Right ventricle myocardium superior (tissue), 1 donor: ENCODE measurements at regions of chr9 and their contacts with region 1.

Region 1: GRCh38 chr9:37913480-37914153 is 9.7 kb upstream of the SLC25A51 start:
- DNase-seq: peak; percentile 81
- ATAC-seq: peak; percentile 91

Region 2: DNA sequence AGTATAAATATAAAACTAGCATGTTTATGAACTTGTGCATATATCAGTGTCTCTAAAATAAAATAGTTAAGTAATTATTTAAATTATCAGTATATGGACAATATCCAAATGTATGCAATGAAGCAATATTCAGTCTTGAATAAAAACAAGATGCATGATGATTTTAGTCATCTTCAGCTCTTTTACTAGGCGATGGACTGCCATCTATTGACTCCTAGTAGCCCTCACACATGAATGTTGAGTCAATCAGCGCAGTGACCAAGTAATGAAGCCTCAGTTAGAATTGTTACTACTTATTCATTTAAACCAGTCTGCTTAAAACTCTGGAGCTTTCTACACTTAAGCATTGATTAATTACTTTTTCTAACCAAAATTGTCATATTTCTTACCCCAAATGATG is 584.0 kb before region 1 on chr9:
- intact Hi-C with region 1: no loop called
- DNase-seq: no peak
- ATAC-seq: no peak

Region 3: DNA sequence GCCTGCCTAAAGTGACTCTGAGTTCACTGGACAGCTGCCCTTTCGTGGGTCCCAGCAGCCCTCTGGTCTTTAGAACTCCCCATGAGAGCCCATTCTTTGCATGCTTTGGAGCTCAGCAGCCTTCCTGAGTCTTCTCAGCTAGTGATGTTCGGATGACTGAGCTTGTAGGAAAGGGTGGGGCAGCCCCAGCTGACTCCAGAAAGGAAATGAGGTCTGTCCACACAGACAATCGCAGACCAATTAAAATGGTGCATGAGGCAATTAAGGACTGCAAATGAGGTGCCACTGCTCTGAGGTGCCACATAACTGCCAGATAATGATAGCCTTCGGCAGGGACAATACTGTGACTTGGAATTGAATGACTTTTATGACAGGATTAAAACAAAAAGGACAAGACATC is 295.8 kb before region 1 on chr9:
- intact Hi-C with region 1: no loop called
- DNase-seq: no peak
- ATAC-seq: no peak

Region 4: DNA sequence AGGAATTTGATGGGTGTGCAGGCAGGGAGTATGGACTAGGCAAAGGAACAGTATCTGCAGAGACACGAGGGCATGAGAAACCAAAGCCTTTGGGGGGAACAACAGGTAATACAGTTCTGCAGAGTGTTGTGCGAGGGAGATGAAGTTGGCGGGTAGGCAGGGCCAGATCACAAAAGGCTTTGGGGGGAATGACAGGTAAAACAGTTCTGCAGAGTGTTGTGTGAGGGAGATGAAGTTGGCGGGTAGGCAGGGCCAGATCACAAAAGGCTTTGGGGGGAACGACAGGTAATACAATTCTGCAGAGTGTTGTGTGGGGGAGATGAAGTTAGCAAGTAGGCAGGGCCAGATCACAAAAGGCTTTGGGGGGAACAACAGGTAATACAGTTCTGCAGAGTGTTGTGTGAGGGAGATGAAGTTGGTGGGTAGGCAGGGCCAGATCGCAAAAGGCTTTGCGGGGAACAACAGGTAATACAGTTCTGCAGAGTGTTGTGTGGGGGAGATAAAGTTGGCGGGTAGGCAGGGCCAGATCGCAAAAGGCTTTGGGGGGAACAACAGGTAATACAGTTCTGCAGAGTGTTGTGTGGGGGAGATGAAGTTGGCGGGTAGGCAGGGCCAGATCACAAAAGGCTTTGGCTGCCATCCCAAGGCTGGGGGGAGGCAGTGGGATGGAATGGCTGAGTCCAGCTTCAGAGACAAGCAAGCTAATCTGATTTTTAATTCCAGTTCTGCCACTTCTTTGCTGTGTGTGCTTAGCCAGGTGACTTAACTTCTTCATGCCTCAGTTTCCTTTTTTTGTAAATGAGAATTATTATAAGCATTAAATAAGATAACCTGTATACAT is 229.9 kb before region 1 on chr9:
- intact Hi-C with region 1: no loop called
- DNase-seq: no peak
- ATAC-seq: no peak

Region 5: DNA sequence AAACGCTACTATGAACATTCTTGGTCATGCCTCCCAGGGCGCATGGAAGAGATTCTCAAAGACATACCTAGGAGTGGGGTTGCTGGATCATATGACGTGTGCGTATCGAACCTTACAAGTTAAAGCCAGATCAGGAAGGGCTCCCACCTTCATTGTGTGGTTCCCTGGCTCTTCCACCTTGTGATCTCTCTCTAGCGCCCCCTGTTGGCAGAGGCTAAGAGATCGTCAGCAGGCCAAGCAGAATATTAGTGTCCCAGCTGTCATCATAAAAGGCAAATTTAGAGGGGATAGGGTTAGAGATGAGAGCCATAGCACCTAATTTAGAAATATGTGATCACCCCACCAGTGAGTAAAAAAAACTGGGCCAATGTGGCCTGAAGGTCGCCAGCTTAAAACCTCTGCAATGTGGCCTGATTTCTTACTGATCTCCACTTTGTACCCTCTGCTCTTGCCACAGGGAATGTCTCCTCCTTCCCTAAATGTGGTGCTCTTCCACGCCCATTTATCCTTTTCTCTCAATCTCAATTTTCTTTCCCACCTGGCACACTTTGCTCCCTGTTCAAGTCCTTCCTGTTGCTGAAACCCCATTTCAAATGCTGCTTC is 247.1 kb after region 1 on chr9:
- intact Hi-C with region 1: loop called (anchors 5 kb)
- DNase-seq: peak; percentile 63
- ATAC-seq: peak; percentile 69

Region 6: GRCh38 chr9:38362852-38363593 is 449.4 kb after region 1 on chr9:
- intact Hi-C with region 1: loop called (anchors 5 kb)
- DNase-seq: no peak
- ATAC-seq: peak; percentile 87